Right ventricle myocardium superior (tissue), 1 donor: ENCODE measurements at regions of chr14 and their contacts with region 1.

Region 1: DNA sequence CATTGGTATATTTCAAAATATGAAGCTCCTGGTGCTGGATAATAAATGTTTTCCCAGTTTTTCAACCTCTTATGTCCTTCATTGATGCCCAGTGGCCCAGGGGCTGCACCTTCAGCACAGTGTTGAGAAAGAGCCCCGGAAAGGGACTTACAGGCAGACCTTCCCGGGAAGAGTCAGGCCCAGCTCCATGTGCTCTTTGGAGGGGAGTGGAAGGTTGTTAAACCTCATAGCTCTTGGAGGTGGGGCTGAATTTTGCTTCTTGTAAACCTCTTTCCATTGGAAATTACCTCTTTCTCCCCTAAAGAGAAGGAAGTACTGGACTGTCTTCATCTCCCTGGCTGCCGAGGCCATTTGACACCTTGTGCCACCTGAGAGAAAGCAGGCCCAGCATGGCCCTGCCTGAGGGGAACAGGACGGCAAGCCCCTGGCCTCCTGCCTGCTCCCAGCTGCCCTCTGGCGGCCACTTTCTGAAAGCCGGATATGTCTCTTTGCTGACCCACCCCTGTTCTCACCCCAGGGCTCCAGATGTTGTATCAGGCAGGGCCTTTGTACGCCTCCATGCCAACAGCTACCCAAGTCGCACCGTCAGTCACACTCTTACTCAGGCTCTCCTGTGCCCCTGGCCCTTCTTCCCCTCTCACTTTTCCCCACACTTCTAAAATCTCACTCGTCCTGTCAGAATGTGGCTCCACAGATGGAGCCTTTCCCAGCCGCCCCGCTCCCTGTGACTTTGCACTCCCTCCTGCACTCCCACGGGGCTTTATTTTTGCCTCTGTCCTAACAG is 43.0 kb downstream of the EVL start:
- DNase-seq: peak; percentile 90
- ATAC-seq: peak; percentile 92

Region 2: GRCh38 chr14:99563233-99564129 is 544.8 kb before region 1 on chr14:
- intact Hi-C with region 1: no loop called
- DNase-seq: peak; percentile 86
- ATAC-seq: peak; percentile 80

Region 3: DNA sequence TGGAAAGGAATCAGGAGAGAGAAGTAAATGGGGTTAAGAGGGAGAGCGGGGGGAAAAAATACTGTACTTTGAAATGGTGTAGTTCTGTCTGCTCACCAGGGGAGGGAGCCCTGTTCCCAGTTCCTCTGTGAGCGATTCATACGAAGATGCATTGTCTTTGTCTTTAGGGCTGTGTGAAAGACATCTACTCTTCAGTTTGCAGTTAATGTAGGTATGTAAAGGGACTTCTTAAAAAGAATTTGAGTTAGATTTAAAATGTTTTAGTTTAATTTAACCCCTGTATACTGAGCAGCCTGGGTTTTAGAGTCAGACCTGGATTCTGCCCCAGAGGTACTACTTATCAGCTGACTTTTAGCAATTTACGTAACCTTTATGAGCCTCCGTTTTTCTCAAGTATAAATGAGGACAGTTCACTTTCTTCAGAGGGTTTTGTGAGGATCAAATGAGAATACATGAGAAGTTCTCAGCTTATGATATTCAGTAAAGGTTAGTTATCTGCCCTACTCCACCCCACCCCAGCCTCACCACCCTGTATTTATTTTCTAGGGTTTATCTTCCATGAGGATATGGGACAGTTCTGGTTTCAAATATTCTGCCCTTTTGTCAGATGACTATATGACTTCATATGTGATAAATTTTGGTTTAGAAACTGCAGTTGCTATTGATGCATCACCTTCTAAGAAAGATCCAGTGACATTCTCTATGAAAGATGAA is 125.5 kb before region 1 on chr14:
- intact Hi-C with region 1: loop called (anchors 2 kb)
- DNase-seq: no peak
- ATAC-seq: peak; percentile 90

Region 4: GRCh38 chr14:99995700-99996356 is 112.4 kb before region 1 on chr14:
- intact Hi-C with region 1: loop called (anchors 5 kb)
- DNase-seq: peak; percentile 50
- ATAC-seq: peak; percentile 76

Region 5: GRCh38 chr14:100192672-100193416 is 84.6 kb after region 1 on chr14:
- intact Hi-C with region 1: loop called (anchors 5 kb)
- DNase-seq: peak; percentile 100
- ATAC-seq: peak; percentile 99

Region 6: DNA sequence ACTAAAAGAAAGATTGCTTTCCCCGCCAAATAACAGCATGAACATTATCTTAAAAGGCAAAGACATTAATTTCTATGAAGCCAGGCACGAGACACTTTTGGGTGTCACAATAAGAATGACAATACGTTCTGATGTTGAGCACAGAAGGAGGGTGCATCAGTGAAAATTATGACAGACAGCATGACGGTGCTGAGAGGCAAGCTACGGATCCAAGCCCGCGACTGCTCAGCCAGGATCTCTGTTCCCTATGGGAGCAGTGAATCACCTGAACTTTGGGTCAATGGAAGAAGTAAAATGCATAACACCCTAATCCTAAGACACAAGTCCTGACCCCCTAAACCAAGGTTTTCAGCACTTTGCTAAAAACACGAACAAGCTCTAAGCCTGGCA is 266.6 kb after region 1 on chr14:
- intact Hi-C with region 1: no loop called
- DNase-seq: no peak
- ATAC-seq: no peak

Region 7: DNA sequence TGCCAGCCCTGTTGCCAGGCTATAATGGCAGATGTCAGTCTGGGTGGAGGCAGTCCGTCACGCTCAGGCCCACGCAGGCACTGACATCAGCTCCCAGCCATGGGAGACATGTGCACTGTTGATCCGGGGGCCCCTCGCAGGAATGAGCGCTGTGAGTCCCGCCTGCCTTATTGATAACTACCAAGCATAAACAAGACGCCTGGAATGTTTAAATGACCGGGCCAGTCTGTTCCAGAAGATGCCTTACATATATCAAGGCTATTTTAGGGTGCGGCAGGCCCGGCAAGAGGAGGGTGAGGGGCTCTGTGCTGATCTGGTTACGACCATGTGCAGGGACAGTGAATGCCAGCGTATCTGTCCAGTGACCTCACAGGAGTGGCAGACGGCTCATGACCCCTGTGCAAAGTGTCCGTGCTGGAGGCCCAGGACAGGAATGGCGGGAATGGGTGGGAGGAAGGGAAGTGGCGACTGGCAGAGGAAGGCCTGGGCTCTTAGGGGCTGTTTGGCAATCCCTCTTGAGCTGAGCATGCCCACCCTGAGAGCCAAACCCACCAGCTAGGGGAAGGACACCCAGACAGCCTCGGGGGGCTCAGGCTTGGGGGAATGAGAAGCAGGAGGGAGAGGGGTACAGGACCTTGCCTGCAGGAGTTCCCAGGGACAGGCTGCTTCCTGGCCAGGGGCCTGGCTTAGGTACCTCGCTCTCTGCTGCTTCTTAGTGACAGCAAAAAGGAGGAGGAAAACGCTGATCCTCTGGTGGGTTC is 667.8 kb after region 1 on chr14:
- intact Hi-C with region 1: no loop called
- DNase-seq: no peak
- ATAC-seq: no peak